ENCODE measurements at regions of chr7 and their contacts with region 1.

Region 1: DNA sequence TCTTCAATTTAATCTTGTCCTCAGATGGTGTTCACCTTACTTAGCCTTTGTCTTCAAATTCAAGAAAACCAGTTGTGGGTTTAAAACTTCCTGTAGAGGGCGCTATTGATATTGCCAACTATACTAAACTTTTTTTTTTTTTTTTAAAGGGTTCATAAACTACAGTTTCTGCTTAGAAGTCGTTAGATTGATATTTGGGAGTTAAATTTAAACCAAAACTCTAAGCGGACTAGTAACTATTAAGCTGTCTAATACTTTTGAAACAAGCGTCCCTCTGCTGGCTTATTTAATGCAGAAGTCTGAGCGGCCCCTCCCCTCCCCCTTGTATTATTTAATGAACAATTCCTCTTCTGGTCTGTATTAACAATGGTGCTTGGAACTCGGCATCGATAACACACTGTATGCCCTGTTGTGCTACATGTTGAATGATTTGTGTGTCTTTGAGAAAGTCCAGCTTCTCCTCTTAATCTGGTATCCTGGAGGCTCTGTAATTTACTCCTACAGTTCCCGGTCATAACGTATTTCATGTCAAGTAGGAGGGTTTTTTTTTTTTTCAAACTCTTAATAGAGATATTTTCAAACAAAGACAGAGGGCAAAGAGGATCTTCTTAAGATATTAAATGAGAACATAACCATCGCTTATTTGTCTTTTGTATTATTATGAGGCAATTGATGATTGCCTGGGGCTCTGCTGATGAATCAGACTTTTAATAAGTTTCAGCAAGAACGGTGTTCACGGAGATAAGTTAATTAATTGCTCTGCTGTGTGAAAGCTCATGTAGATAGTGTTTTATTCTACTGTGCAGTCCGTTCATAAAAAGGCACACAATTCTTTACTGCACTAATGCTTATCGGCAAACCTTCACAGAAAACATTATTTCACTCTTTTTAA is 22.6 kb upstream of the CREB5 start:
- DNase-seq: peak; percentile 83
- ATAC-seq: peak; percentile 65
- H3K4me3 ChIP-seq: peak overlapping the region; percentile 65
- H3K27ac ChIP-seq: no peak overlapping the region
- H3K4me1 ChIP-seq: peaks cover 8% of the 10 kb centered on the region
- H3K27me3 ChIP-seq: no peaks in the 10 kb centered on the region
- CTCF ChIP-seq: peak; percentile 91

Region 2: GRCh38 chr7:28298870-28299518 is 90.8 kb before region 1 on chr7:
- CTCF ChIA-PET with region 1: no interaction called
- POLR2A ChIA-PET with region 1: no interaction called
- intact Hi-C with region 1: loop called (anchors 1 kb)
- DNase-seq: peak; percentile 85
- ATAC-seq: peak; percentile 94
- H3K4me3 ChIP-seq: no peak overlapping the region
- H3K27ac ChIP-seq: 0 out of 2 replicates have a peak overlapping the region, but pooled peaks have one; percentile 13
- H3K4me1 ChIP-seq: peaks cover 13% of the 10 kb centered on the region
- H3K27me3 ChIP-seq: no peaks in the 10 kb centered on the region
- CTCF ChIP-seq: peak; percentile 82

Region 3: GRCh38 chr7:28626624-28627262 is 237.0 kb after region 1 on chr7:
- CTCF ChIA-PET with region 1: interaction called, 3 read pairs
- POLR2A ChIA-PET with region 1: no interaction called
- intact Hi-C with region 1: loop called (anchors 1 kb)
- DNase-seq: peak; percentile 68
- ATAC-seq: peak; percentile 55; the same call in 1 of the 2 replicates
- H3K4me3 ChIP-seq: no peak overlapping the region
- H3K27ac ChIP-seq: no peak overlapping the region
- H3K4me1 ChIP-seq: peaks cover 12% of the 10 kb centered on the region; the same call in 1 of the 2 replicates
- H3K27me3 ChIP-seq: no peaks in the 10 kb centered on the region
- CTCF ChIP-seq: peak; percentile 84

Region 4: DNA sequence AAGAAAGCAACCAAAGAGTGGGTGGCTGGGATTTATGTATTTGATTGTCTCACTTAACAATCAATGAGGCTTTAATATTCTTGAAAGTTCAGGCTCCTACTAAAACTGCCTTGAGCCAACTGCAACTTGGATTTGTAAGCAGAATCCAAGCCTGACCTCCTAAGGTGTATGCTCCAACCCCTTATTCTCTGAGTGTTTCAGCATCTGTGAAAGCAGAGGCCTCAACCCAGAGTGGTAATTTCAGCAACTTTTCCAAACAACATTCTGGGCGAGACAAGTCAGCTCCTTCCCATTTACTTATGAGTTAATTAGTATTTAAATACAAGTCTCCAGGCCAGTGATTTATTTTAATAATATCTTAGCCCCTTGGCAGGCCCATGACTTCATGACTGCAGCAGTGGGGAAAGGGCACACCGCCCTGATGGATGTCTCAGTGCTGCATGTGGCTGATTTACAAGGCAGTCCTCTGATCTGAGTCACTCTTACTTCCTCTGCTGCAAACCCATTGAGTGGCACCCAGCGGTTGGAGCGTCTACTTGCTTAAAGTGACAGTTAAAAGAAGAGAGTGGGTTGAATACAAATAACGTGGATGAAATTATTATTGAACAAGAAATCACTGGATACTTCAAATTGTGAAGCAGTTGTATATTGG is 359.3 kb after region 1 on chr7:
- CTCF ChIA-PET with region 1: no interaction called
- POLR2A ChIA-PET with region 1: no interaction called
- intact Hi-C with region 1: loop called (anchors 2 kb)
- DNase-seq: peak; percentile 86
- ATAC-seq: peak; percentile 100
- H3K4me3 ChIP-seq: no peak overlapping the region
- H3K27ac ChIP-seq: peak overlapping the region; percentile 44
- H3K4me1 ChIP-seq: peaks cover 13% of the 10 kb centered on the region
- H3K27me3 ChIP-seq: no peaks in the 10 kb centered on the region
- CTCF ChIP-seq: peak; percentile 30

Region 5: DNA sequence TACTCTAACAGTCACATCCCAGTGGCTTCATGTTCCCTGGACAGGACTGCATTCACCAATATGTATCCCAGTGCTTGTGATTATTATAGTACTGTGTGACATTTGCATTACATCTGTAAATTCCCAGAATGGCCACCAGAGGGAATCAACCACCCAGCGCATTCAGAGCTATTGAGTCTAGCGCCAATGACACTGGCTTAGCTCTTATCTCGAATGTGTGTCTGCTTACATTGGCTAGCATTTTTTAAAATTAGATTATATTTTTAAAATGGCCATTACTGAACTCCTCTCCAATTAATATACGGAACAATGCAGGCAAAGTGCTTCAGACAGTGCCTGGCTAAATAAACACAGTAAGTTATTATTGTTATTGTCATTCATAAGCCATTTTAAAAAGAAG is 532.1 kb after region 1 on chr7:
- CTCF ChIA-PET with region 1: interaction called, 5 read pairs
- POLR2A ChIA-PET with region 1: no interaction called
- intact Hi-C with region 1: loop called (anchors 5 kb)
- DNase-seq: peak; percentile 81
- ATAC-seq: peak; percentile 89
- H3K4me3 ChIP-seq: 0 out of 2 replicates have a peak overlapping the region, but pooled peaks have one; percentile 7
- H3K27ac ChIP-seq: no peak overlapping the region
- H3K4me1 ChIP-seq: peaks cover 7% of the 10 kb centered on the region; the same call in 1 of the 2 replicates
- H3K27me3 ChIP-seq: no peaks in the 10 kb centered on the region
- CTCF ChIP-seq: peak; percentile 83

Measured in PC-3 (cell line).